ENCODE measurements at regions of chr11 and their contacts with region 1.

Region 1: GRCh38 chr11:132300283-132300682 is 929.9 kb downstream of the NTM start:
- DNase-seq: peak; percentile 42
- H3K4me3 ChIP-seq: no peak overlapping the region
- H3K27ac ChIP-seq: no peak overlapping the region
- H3K4me1 ChIP-seq: no peaks in the 10 kb centered on the region
- H3K27me3 ChIP-seq: no peaks in the 10 kb centered on the region
- CTCF ChIP-seq: peak; percentile 46
- EP300 ChIP-seq: no peak
- RAD21 ChIP-seq: peak; percentile 42

Region 2: GRCh38 chr11:132196928-132197327 is 103.4 kb before region 1 on chr11:
- CTCF ChIA-PET with region 1: no interaction called
- POLR2A ChIA-PET with region 1: no interaction called
- DNase-seq: no peak
- H3K4me3 ChIP-seq: no peak overlapping the region
- H3K27ac ChIP-seq: no peak overlapping the region
- H3K4me1 ChIP-seq: no peaks in the 10 kb centered on the region
- H3K27me3 ChIP-seq: no peaks in the 10 kb centered on the region
- CTCF ChIP-seq: no peak
- EP300 ChIP-seq: no peak
- RAD21 ChIP-seq: no peak

Region 3: DNA sequence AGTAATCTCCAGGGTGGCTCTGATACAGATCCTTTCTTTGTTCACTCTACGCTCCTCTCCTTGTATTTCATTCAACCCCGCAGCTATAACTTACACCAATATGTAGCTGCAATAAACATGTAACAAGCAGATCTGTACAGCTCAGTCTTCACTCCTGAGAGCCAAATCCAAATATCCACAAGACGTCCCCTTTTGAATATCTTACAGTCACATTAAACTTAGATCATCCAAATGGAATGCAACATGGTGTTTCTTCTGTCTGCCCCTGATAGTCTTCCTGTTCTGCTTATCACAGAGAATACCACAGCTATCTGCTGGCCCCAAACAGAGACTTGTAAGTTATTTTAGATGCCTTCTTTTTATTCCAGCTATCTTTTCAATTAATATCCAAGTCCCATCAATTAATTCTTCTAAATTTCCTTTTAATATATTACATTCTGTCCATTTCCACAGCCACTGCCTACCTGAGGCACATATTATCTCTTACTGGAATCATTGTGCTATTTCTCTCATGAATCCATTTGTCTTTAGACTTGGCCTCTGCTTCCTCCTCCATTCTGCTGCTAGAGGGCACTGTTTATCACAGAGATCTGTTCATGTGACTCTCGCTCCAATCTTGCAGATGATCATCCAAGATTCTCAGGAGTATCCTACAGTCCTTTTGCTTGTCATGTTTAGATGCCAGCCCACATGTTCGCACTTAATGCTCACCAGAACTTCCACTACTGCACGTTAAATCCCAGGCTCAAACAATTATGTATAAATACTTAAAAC is 21.3 kb before region 1 on chr11:
- CTCF ChIA-PET with region 1: interaction called, 13 read pairs
- POLR2A ChIA-PET with region 1: no interaction called
- DNase-seq: no peak
- H3K4me3 ChIP-seq: no peak overlapping the region
- H3K27ac ChIP-seq: peak overlapping the region in 1 of 2 experiments; percentile 22; a peak in 2 of 4 replicates
- H3K4me1 ChIP-seq: peaks cover 0 to 5% of the 10 kb centered on the region in 2 experiments; a peak in 1 of 4 replicates
- H3K27me3 ChIP-seq: no peaks in the 10 kb centered on the region
- CTCF ChIP-seq: peak; percentile 64
- EP300 ChIP-seq: no peak
- RAD21 ChIP-seq: peak; percentile 50

Region 4: DNA sequence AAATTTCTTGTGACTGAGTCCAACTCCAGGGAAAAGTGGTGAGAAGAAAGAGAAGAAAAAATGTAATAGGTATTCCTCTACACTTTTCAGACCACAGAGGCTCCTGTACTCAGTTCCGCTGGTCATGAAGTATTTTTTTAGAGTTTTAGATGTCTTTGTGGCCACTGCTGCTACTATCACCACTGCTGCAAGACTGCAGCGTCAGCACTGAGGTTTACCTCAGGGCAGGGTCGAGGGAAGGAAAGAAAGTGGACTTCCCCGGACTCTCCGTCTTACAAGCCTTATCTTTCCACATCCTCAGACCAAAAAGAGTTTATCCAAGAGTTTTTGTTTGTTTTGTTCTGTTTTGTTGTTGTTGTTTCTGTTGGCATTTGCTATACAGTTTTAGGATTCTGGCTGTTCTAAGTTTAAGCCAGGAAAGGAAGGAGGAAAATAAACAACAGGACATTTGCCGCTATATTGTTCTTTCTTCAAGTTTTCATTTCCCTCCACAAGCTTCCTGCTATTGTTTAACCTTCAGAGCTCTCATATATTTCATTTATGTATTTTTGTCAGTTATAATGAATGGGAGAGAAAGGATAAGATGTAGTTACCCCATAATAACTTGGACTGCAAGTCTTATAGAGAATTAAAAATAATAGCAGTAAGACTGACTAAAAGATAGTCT is 10.6 kb before region 1 on chr11:
- CTCF ChIA-PET with region 1: interaction called, 15 read pairs
- POLR2A ChIA-PET with region 1: no interaction called
- DNase-seq: no peak
- H3K4me3 ChIP-seq: no peak overlapping the region
- H3K27ac ChIP-seq: no peak overlapping the region
- H3K4me1 ChIP-seq: no peaks in the 10 kb centered on the region
- H3K27me3 ChIP-seq: no peaks in the 10 kb centered on the region
- CTCF ChIP-seq: no peak
- EP300 ChIP-seq: no peak
- RAD21 ChIP-seq: no peak

Region 5: DNA sequence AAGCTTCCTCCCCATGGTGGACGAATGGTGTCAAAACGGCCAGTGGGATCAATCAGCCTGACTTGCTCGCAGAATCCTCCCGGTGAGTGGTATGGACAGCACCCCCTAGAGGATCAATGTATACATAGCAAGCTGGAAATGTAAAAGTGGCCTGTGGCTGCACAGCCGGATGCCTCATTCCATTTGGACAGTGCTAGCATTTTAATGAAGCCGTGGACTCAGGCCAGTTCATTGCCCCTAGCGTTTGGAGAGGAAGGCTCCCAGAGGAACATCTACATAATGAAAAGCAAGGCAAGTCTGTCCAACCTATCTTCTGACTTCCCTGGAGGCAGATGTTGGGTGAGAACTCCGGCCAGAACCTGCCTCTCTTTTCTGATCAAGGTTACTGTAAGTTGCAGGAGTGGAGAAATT is 12.4 kb after region 1 on chr11:
- CTCF ChIA-PET with region 1: interaction called, 64 read pairs
- POLR2A ChIA-PET with region 1: no interaction called
- DNase-seq: peak; percentile 65
- H3K4me3 ChIP-seq: no peak overlapping the region; a peak in 1 of 4 replicates
- H3K27ac ChIP-seq: no peak overlapping the region
- H3K4me1 ChIP-seq: peaks cover 6 to 11% of the 10 kb centered on the region in 2 experiments; a peak in 2 of 4 replicates
- H3K27me3 ChIP-seq: no peaks in the 10 kb centered on the region
- CTCF ChIP-seq: peak; percentile 72
- EP300 ChIP-seq: no peak
- RAD21 ChIP-seq: peak; percentile 53